B cell (primary cell): ENCODE measurements at regions of chr1 and their contacts with region 1.

Region 1: GRCh38 chr1:214602764-214603657 is at the start of gene CENPF:
- DNase-seq: peak; percentile 96
- ATAC-seq: peak; percentile 98
- H3K4me3 ChIP-seq: peak within 1 kb of the TSS; percentile 60 to 82 (median 78)
- H3K4me3 Mint-ChIP-seq: peak within 1 kb of the TSS; percentile 85
- H3K27ac ChIP-seq: peak within 1 kb of the TSS in 1 of 2 donors; percentile 36
- H3K27ac Mint-ChIP-seq: peak within 1 kb of the TSS; percentile 70
- H3K4me1 ChIP-seq: peaks cover 12 to 15% of the 10 kb centered on the region in 2 donors
- H3K4me1 Mint-ChIP-seq: peaks cover 21% of the 10 kb centered on the region
- H3K27me3 ChIP-seq: no peaks in the 10 kb centered on the region
- H3K27me3 Mint-ChIP-seq: no peaks in the 10 kb centered on the region
- CTCF ChIP-seq: peak; percentile 26
- total RNA-seq, gene CENPF: 2.9 and 3.0 TPM in 2 replicates

Region 2: DNA sequence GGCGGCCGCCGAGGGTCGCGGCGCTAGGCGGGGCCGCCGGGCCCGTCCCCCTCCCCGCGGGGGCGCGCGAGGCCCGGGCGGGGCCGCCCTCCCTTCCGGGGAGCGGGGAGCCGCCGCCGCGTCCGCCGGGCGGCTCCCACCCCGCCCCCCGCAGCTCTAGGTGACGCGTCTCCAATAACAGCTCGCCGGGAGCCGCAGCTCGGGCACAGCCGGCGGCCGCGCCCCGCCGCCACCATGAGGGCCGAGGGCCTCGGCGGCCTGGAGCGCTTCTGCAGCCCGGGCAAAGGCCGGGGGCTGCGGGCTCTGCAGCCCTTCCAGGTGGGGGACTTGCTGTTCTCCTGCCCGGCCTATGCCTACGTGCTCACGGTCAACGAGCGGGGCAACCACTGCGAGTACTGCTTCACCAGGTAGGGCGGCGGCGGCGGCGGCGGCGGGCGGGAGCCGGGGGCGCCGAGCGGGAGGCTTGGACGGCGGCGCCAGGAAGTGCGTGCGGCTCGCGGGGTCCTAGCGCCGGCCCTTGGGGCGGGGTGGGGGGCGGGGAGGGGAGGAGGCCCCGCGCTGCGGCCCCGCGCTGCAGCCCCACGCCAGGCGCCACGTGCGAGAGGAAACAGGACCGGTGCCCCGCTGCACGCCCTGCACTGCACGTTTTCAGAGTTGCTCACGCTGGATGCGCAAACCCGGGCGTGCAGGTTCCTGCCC is 321.8 kb before region 1 on chr1 and contains the start of gene SMYD2:
- CTCF ChIA-PET with region 1: no interaction called
- POLR2A ChIA-PET with region 1: no interaction called
- intact Hi-C with region 1: loop called (anchors 1 kb)
- DNase-seq: peak; percentile 79
- ATAC-seq: peak; percentile 77
- H3K4me3 ChIP-seq: peak within 1 kb of the TSS; percentile 56 to 86 (median 69)
- H3K4me3 Mint-ChIP-seq: peak within 1 kb of the TSS; percentile 89
- H3K27ac ChIP-seq: peak within 1 kb of the TSS; percentile 58 to 74
- H3K27ac Mint-ChIP-seq: peak within 1 kb of the TSS; percentile 78
- H3K4me1 ChIP-seq: peaks cover 17 to 28% of the 10 kb centered on the region in 2 donors
- H3K4me1 Mint-ChIP-seq: peaks cover 29% of the 10 kb centered on the region
- H3K27me3 ChIP-seq: no peaks in the 10 kb centered on the region
- H3K27me3 Mint-ChIP-seq: no peaks in the 10 kb centered on the region
- CTCF ChIP-seq: no peak
- total RNA-seq, gene SMYD2: 29.1 and 29.5 TPM in 2 replicates

Region 3: DNA sequence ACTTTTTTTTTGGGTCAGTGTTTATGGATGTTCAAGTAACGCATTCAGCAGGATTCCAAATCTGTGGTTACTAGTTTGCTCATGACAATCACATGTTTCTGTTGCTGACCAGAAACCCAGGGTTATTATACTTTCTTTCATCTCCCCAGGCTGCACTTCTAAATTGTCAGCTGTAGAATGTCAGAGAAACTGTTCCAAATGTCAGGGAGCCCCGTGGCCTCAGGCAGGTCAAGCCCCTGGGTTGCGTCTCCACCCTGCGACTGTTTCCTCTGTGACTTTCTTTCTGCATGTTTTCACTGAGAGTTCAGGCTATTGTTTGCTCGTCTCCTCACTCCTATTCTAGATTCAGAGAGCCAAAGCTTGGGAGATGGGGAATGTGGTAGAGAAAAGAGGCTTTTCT is 97.4 kb after region 1 on chr1:
- CTCF ChIA-PET with region 1: no interaction called
- POLR2A ChIA-PET with region 1: no interaction called
- intact Hi-C with region 1: no loop called
- DNase-seq: no peak
- ATAC-seq: no peak
- H3K4me3 ChIP-seq: no peak overlapping the region
- H3K4me3 Mint-ChIP-seq: no peak overlapping the region
- H3K27ac ChIP-seq: no peak overlapping the region
- H3K27ac Mint-ChIP-seq: no peak overlapping the region
- H3K4me1 ChIP-seq: no peaks in the 10 kb centered on the region
- H3K4me1 Mint-ChIP-seq: no peaks in the 10 kb centered on the region
- H3K27me3 ChIP-seq: no peaks in the 10 kb centered on the region
- H3K27me3 Mint-ChIP-seq: peaks cover 4% of the 10 kb centered on the region
- CTCF ChIP-seq: no peak